OCI-LY7 (cell line): ENCODE measurements at regions of chr17 and their contacts with region 1.

Region 1: GRCh38 chr17:10087081-10087754 is 111.2 kb downstream of the GAS7 start:
- DNase-seq: no peak
- H3K4me3 ChIP-seq: no peak overlapping the region
- H3K27ac ChIP-seq: no peak overlapping the region
- H3K4me1 ChIP-seq: no peaks in the 10 kb centered on the region
- CTCF ChIP-seq: no peak

Region 2: DNA sequence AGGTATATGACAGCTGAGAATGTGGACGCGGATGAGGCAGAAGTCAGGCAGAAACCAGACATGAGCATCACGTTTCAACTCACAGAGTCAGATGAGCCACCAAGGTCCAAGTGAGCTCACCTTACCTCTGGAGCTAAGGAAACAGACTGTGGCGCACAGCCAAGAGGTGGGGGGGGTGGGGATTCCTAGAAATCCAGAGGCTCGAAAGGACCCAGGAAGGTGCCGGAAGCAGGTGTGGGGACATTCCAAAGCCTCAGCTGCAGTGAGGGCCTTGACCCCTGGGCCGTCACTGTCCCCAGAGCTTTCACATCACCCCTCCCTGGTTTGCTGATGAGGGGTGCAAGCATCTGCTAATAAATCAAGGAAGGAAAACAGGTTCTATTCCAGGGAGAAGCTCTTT is 152.9 kb before region 1 on chr17:
- CTCF ChIA-PET with region 1: interaction called, 11 read pairs
- POLR2A ChIA-PET with region 1: no interaction called
- intact Hi-C with region 1: no loop called
- DNase-seq: no peak
- H3K4me3 ChIP-seq: no peak overlapping the region
- H3K27ac ChIP-seq: no peak overlapping the region
- H3K4me1 ChIP-seq: no peaks in the 10 kb centered on the region
- CTCF ChIP-seq: no peak

Region 3: GRCh38 chr17:10050597-10051101 is 36.6 kb before region 1 on chr17:
- CTCF ChIA-PET with region 1: no interaction called
- POLR2A ChIA-PET with region 1: no interaction called
- intact Hi-C with region 1: no loop called
- DNase-seq: no peak
- H3K4me3 ChIP-seq: no peak overlapping the region
- H3K27ac ChIP-seq: no peak overlapping the region
- H3K4me1 ChIP-seq: no peaks in the 10 kb centered on the region
- CTCF ChIP-seq: no peak